ENCODE measurements at regions of chr6 and their contacts with region 1.

Region 1: GRCh38 chr6:53309059-53309900 is 39.5 kb downstream of the ELOVL5 start:
- DNase-seq: peak; percentile 95
- H3K4me3 ChIP-seq: peak overlapping the region; percentile 61
- H3K27ac ChIP-seq: peak overlapping the region; percentile 99
- H3K4me1 ChIP-seq: peaks cover 80% of the 10 kb centered on the region
- CTCF ChIP-seq: no peak

Region 2: DNA sequence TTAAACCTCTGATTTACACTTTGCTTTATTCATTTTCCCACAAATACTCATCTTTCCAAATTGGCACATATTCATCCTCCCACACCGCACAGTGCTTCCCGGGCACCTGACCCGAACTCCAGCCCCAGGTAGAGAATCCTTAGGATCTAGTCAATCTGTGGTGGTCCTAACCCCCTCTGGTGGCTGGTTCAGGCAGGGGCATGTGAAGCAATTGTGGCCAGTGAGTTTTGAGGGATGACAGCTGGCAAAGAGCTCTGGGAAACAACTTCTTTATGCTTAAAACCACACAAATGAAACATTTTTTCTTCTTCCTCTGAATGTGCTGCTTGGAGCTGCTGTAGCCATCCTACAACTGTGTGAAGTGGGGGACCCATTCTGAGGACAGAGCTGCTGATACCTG is 15.2 kb before region 1 on chr6:
- CTCF ChIA-PET with region 1: interaction called, 6 read pairs
- POLR2A ChIA-PET with region 1: interaction called, 25 read pairs
- intact Hi-C with region 1: no loop called
- DNase-seq: peak; percentile 54
- H3K4me3 ChIP-seq: no peak overlapping the region
- H3K27ac ChIP-seq: no peak overlapping the region
- H3K4me1 ChIP-seq: peaks cover 16% of the 10 kb centered on the region
- CTCF ChIP-seq: peak; percentile 95

Region 3: GRCh38 chr6:53327017-53327395 is 17.7 kb after region 1 on chr6:
- CTCF ChIA-PET with region 1: interaction called, 3 read pairs
- POLR2A ChIA-PET with region 1: interaction called, 36 read pairs
- intact Hi-C with region 1: no loop called
- DNase-seq: no peak
- H3K4me3 ChIP-seq: no peak overlapping the region
- H3K27ac ChIP-seq: no peak overlapping the region
- H3K4me1 ChIP-seq: peaks cover 50% of the 10 kb centered on the region
- CTCF ChIP-seq: no peak

Region 4: DNA sequence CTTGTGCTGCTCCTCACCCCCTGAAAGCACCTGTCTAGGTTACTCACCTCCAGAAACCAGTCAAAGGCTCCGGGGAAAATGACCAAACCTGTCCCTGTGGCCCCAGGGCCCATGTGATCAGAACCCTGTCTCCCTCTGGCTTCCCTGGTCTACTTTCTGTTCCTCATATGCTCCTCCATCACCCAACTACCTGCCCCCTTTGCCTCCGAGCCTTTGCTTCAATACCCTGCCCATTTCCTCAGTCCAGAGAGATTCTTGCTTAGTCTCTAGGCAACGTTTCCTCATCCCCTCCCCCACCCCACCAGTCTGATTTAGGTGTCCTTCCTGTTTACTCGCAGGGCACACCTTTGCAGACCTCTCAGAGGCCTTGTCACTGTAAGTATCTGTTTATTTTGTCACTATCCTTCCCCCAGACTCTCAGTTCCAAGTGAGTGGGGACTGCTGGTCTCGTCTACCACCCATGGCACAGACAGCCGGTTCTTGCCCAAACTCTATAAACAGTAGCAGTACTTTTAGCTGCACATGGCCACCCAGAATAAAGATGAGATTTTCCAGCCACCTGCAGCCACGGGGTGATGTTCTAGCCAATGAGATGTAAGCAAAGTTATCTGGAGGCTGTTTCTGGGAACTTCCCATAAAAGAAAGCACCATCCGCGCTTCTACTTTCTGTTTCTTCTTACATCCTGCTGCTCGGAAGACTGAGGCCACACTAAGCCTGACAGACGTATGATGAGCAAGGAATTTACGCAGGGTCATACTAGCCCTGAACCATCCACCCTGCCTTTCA is 26.1 kb after region 1 on chr6:
- CTCF ChIA-PET with region 1: no interaction called
- POLR2A ChIA-PET with region 1: interaction called, 21 read pairs
- intact Hi-C with region 1: loop called (anchors 1 kb)
- DNase-seq: peak; percentile 93
- H3K4me3 ChIP-seq: peak overlapping the region; percentile 67
- H3K27ac ChIP-seq: peak overlapping the region; percentile 94
- H3K4me1 ChIP-seq: peaks cover 75% of the 10 kb centered on the region
- CTCF ChIP-seq: no peak

Region 5: DNA sequence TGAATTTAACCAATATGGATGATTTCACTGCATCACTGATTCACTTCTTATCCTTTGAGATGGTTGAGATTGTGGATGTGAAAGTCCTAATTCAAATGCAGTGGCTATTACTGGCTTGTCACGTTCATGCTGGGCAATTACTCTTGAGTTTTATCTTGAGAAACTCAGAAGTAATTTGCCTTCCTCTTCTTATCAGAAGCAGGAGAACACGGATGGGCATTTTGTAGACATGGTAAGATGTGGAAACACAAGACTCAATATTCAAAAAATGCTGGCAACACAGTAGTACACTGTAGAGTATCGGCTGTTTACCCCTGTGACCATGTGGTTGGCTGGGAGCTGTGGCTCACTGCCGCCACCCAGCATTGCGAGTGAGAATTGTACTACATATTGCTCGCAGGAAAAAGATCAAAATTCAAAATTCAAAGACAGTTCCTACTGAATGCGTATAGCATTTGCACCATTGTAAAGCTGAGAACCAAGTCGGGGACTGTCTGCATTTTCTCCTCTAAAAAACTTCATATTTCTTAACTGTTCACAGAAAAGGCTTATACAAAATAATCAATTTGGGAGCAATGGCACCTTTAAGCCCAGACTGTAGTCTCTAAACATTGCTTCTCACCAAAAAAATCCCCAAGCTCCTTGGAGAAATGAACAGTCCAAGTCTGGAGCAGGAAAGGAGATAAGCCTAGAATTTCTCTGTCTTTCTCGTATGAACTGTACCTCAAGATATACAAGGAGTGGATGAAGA is 101.4 kb after region 1 on chr6:
- CTCF ChIA-PET with region 1: no interaction called
- POLR2A ChIA-PET with region 1: interaction called, 5 read pairs
- intact Hi-C with region 1: loop called (anchors 1 kb)
- DNase-seq: peak; percentile 80
- H3K4me3 ChIP-seq: peak overlapping the region; percentile 19
- H3K27ac ChIP-seq: peak overlapping the region; percentile 39
- H3K4me1 ChIP-seq: peaks cover 17% of the 10 kb centered on the region
- CTCF ChIP-seq: peak; percentile 99

Region 6: DNA sequence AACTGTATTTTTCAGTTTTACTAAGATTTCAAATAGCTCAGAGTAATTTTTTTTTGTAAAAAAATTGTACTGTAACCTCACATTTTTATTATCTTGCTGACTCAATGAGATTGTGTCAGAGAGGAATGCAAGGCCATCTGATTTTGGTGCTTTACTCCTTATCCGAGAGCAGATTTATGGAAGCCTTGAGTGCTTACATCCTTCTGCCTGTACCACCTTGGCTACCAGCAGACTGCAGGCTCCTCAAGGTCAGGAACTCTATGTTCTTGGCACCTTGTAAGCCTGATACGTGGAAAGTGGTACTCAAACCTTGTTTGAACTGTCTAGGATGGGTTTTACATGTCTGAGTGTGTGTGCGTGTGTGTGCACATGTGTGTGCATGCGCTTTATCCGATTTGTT is 721.9 kb after region 1 on chr6:
- CTCF ChIA-PET with region 1: no interaction called
- POLR2A ChIA-PET with region 1: no interaction called
- intact Hi-C with region 1: no loop called
- DNase-seq: no peak
- H3K4me3 ChIP-seq: no peak overlapping the region
- H3K27ac ChIP-seq: no peak overlapping the region
- H3K4me1 ChIP-seq: no peaks in the 10 kb centered on the region
- CTCF ChIP-seq: no peak

Measured in OCI-LY7 (cell line).